ENCODE measurements at regions of chr6 and their contacts with region 1.

Region 1: GRCh38 chr6:32971581-32972352 is 3.4 kb downstream of the BRD2 start:
- DNase-seq: peak; percentile 100
- H3K4me3 Mint-ChIP-seq: peak overlapping the region; percentile 90
- H3K27ac Mint-ChIP-seq: peak overlapping the region; percentile 99
- H3K4me1 Mint-ChIP-seq: peaks cover 38% of the 10 kb centered on the region
- H3K27me3 Mint-ChIP-seq: no peaks in the 10 kb centered on the region
- CTCF ChIP-seq: no peak

Region 2: GRCh38 chr6:32127717-32128592 is 843.8 kb before region 1 on chr6 and contains the start of gene ATF6B:
- CTCF ChIA-PET with region 1: no interaction called
- POLR2A ChIA-PET with region 1: interaction called, 10 read pairs
- intact Hi-C with region 1: no loop called
- DNase-seq: peak; percentile 99
- H3K4me3 Mint-ChIP-seq: peak within 1 kb of the TSS; percentile 99
- H3K27ac Mint-ChIP-seq: peak within 1 kb of the TSS; percentile 96
- H3K4me1 Mint-ChIP-seq: peaks cover 26% of the 10 kb centered on the region
- H3K27me3 Mint-ChIP-seq: no peaks in the 10 kb centered on the region
- CTCF ChIP-seq: no peak
- total RNA-seq, gene ATF6B: 65.6 and 86.5 TPM in 2 replicates

Region 3: DNA sequence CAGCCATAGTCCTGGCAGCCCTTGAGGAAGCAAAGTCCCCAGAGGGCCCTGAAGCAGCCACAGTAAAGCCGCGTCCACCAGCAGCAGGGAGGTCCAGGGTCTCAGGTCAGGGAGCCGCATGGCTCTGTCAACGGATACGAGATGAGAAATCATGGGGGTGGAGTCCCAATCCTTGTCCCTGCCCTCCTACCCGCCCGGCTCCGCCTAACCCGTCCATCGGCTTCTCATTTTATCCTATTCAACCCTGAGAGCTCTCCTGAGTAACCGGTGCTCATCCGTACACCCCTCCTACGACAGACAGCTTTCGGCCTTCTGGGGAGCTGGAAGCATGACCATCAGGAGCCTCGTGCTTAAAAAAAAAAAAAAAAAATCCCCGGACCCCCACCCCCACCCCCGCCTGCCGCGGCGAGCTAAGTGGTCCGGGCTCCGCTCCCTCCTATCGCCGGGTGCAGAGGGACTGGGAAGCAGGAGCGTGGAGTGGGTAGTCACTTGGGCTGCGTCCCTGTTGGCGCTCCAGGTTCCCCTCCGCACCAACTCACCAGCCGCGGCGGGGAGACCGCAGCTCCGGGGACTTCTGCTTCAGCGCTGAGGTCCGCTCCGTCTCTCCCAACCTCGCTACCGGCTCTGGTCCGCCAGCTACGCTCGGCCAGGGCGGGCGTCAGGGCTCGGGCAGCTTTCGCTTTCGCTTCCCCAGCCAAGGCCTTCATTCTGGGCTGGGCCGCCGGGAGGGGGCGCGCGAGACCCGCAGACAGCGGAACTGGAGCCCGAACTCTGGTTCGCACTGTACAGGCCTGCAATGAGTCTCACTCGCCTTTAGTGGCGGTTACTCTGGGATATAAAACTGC is 133.4 kb before region 1 on chr6 and contains the start of gene TAP2:
- CTCF ChIA-PET with region 1: interaction called, 5 read pairs
- POLR2A ChIA-PET with region 1: interaction called, 26 read pairs
- intact Hi-C with region 1: loop called (anchors 5 kb)
- DNase-seq: peak; percentile 91
- H3K4me3 Mint-ChIP-seq: peak within 1 kb of the TSS; percentile 77
- H3K27ac Mint-ChIP-seq: peak within 1 kb of the TSS; percentile 29
- H3K4me1 Mint-ChIP-seq: peaks cover 34% of the 10 kb centered on the region
- H3K27me3 Mint-ChIP-seq: no peaks in the 10 kb centered on the region
- CTCF ChIP-seq: peak; percentile 96
- total RNA-seq, gene TAP2: 43.3 and 61.2 TPM in 2 replicates

Region 4: GRCh38 chr6:32894080-32895005 is 77.4 kb before region 1 on chr6:
- CTCF ChIA-PET with region 1: interaction called, 14 read pairs
- POLR2A ChIA-PET with region 1: interaction called, 81 read pairs
- intact Hi-C with region 1: no loop called
- DNase-seq: peak; percentile 90
- H3K4me3 Mint-ChIP-seq: peak overlapping the region; percentile 84
- H3K27ac Mint-ChIP-seq: peak overlapping the region; percentile 80
- H3K4me1 Mint-ChIP-seq: peaks cover 10% of the 10 kb centered on the region
- H3K27me3 Mint-ChIP-seq: no peaks in the 10 kb centered on the region
- CTCF ChIP-seq: no peak

Region 5: DNA sequence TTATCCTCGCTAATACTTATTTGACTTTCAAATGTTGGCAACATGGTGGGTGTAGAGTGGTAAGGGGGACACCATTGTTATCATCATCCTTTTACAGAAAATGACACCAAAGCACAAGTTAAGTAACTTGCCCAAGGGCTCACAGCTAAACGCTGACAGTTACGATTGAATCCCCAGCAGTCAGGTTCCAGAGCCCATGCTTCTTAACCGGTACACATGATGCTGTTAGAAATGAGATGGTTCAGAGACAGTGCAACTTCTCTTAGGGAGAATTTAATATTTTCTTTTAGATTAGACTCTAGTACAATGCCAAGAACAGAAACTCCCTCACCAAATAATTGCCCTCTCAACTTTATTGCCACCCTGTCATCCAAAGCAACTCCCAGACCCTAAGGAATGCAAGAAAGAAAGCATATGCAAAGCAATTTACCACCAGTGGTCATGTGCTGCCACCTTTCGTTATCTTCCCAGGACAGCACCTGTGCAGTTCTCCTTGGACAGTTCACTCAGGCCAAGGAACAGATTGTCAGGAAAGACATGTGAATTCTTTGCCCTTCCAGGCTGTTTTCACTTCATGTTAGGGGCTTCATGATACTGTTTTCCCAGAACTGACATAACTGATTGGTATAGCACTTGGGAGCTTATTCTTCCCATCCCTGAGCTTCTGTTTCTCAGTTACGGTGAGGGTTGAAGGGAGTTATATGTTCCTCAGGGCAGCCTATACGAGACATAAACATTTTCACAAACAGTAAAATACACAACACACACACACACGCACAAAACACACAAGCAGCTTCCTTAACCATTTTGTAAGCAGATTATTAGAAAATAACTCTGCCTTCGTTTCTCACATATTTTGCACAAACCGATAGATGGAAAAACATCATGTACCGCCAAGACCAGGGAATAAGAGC is 24.0 kb before region 1 on chr6:
- CTCF ChIA-PET with region 1: interaction called, 55 read pairs
- POLR2A ChIA-PET with region 1: interaction called, 130 read pairs
- intact Hi-C with region 1: no loop called
- DNase-seq: peak; percentile 69
- H3K4me3 Mint-ChIP-seq: no peak overlapping the region
- H3K27ac Mint-ChIP-seq: no peak overlapping the region
- H3K4me1 Mint-ChIP-seq: peaks cover 5% of the 10 kb centered on the region
- H3K27me3 Mint-ChIP-seq: peaks cover 3% of the 10 kb centered on the region
- CTCF ChIP-seq: peak; percentile 75

Region 6: DNA sequence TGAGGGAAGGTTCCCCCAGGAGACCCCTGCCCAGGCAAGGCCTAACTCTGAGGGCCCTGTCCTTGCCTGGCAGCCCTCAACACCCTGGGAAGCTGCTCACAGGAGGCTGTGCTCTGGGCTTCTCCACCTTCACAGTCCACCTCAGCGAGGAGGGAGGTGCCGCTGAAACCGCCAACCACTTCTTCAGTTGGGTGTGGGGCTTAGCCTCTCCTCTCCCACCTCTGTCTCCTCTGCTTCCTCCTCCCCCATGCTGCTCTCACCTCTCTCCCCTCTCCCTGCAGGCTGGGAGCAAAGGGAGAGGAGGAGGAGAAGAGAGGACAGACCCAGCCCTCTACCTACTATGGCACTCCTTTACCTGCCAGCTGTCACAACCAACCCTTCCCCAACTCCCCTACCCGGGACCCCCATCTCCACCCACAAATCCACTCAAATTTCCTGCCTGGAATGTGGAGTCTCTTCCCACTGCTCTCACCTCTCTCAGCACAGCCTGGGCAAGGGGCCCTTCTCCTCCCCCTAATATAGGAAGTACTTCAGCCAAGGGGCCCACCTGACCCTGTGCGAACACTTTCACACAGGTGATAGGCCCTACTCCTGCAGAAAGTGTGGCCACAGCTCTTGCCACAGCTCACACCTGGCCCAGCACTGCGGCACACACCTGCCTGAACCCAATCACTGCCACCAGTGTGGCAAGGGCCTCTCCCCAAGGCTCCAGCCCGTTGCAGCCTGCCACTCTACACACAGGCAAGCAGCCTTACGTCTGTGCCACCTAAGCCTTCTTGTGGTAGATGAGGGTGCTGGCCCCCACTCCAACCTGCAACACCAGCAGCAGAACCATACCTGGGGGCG is 243.7 kb after region 1 on chr6:
- CTCF ChIA-PET with region 1: no interaction called
- POLR2A ChIA-PET with region 1: no interaction called
- intact Hi-C with region 1: no loop called
- DNase-seq: no peak
- H3K4me3 Mint-ChIP-seq: no peak overlapping the region
- H3K27ac Mint-ChIP-seq: no peak overlapping the region
- H3K4me1 Mint-ChIP-seq: peaks cover 17% of the 10 kb centered on the region
- H3K27me3 Mint-ChIP-seq: peaks cover 51% of the 10 kb centered on the region
- CTCF ChIP-seq: no peak

Region 7: DNA sequence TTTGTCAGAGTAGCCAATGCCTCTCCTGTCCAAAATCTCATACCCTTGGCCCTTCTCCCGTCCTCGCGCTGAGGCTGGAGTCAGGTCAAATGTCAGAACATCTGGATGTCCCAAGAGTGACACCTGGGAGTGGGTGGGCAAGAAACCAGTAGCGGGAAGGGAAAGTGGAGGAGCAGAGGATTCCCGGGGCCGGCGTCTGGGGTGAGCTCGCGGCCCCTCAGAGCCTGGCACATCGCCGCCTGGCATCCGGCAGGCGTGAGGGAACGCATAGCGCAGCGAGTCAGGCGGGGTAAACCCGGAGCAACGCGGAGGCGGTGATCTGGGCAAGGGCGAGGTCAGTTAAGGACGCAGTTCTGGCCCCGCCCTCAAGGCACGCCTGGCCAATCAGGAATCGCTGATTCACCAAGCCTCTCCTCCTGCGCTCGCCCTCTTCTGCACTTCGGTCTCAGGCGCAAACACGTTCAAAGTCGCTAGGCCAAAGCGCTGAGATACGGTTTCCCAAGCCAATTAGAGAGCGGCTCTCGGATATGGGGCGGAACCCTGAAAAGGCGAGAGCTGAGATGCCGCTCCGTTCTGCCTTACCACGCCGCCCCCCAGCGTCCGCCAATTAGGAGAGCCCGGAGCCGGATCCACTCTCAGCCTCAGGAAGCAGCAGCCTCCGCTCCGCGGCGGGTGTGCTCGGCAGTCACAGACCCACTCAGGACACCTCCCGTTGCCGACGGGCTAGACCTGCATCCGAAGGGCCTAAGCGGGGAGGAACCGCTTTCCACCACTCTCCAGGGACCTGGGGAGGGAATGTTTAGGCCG is 277.4 kb after region 1 on chr6:
- CTCF ChIA-PET with region 1: interaction called, 3 read pairs
- POLR2A ChIA-PET with region 1: interaction called, 29 read pairs
- intact Hi-C with region 1: no loop called
- DNase-seq: peak; percentile 99
- H3K4me3 Mint-ChIP-seq: peak overlapping the region; percentile 82
- H3K27ac Mint-ChIP-seq: peak overlapping the region; percentile 70
- H3K4me1 Mint-ChIP-seq: peaks cover 22% of the 10 kb centered on the region
- H3K27me3 Mint-ChIP-seq: no peaks in the 10 kb centered on the region
- CTCF ChIP-seq: no peak

Region 8: DNA sequence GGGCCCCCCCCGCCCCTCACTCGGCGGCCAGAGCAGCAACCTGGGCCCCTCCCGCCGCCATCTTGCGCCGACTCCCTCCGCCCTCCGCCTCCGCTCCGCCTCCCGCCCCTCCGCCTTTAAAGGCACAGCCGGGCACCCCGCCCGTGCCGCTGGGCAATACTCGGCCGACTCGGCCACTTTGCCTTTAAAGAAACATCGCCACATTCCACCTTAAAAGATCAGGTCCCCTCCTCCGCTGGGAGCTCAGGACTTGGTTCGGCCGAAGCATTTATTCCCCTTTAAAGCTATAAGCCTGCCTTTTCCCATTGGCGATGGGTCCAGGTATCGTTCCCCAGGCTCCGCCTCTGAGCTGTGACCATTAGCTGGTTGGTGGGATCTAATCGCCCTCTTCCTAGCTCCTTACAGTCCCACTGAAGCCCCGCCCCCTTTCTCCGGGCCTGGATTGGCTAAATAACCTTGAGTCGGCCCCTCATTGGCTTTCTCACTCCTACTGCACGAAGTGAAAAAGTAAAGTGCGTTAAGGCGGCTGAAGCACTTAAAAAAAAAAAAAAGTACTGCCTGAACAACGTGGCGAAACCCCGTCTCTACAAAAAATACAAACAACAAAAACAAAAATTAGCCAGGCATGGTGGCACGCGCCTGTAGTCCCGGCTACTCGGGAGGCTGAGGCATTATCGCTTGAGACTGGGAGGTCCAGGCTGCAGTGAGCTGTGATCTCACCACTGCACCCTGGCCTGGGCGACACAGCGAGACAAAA is 346.1 kb after region 1 on chr6 and contains the start of gene ZBTB22:
- CTCF ChIA-PET with region 1: no interaction called
- POLR2A ChIA-PET with region 1: interaction called, 15 read pairs
- intact Hi-C with region 1: no loop called
- DNase-seq: peak; percentile 100
- H3K4me3 Mint-ChIP-seq: peak within 1 kb of the TSS; percentile 81
- H3K27ac Mint-ChIP-seq: peak within 1 kb of the TSS; percentile 80
- H3K4me1 Mint-ChIP-seq: peaks cover 66% of the 10 kb centered on the region
- H3K27me3 Mint-ChIP-seq: no peaks in the 10 kb centered on the region
- CTCF ChIP-seq: no peak
- total RNA-seq, gene ZBTB22: 12.3 and 15.5 TPM in 2 replicates

Measured in MCF 10A (cell line).